Caco-2 (cell line): ENCODE measurements at regions of chr7 and their contacts with region 1.

Region 1: DNA sequence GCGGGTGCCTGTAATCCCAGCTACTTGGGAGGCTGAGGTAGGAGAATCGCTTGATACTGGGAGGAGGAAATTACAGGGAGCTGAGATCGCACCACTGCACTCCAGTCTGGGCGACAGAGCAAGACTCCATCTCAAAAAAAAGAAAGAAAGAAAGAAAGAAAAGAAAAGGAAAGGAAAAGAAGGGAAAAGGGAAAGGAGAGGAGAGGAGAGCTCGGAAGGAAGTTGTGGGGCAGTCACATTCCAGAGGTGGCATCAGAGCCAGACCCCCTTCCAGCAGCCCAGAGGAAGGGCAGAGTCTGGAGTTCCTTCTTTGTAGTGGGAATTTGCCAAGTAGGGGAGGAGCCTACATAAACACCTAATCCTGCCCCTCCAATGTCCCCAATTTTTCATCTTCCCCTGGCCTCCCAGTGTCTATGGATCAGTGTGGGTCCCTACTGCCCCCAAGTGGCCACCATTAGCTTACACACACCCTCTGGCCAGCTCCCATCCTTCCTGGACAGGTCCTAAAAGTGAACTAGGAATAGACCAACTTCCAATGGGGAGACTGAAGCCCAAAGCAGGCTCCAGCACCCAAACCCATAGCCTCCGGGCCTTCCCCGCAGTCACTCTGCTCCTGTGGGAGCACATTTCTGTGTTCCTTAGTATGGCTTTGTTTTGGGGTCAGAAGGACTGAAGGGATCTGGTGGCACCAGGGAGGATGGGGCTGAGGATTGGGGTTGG is 39.6 kb upstream of the HSPB1 start:
- DNase-seq: peak; percentile 80
- H3K4me3 ChIP-seq: no peak overlapping the region
- H3K4me3 Mint-ChIP-seq: no peak overlapping the region
- H3K27ac Mint-ChIP-seq: no peak overlapping the region
- H3K4me1 ChIP-seq: peaks cover 5% of the 10 kb centered on the region; the same call in 1 of the 2 replicates
- H3K4me1 Mint-ChIP-seq: no peaks in the 10 kb centered on the region
- H3K27me3 ChIP-seq: no peaks in the 10 kb centered on the region; the same call in 1 of the 2 replicates
- H3K27me3 Mint-ChIP-seq: no peaks in the 10 kb centered on the region
- CTCF ChIP-seq: peak; percentile 70 to 87

Region 2: GRCh38 chr7:76166404-76167255 is 96.2 kb before region 1 on chr7:
- CTCF ChIA-PET with region 1: interaction called, 10 read pairs
- POLR2A ChIA-PET with region 1: no interaction called
- intact Hi-C with region 1: no loop called
- DNase-seq: peak; percentile 98 to 99
- H3K4me3 ChIP-seq: peak overlapping the region; percentile 64
- H3K4me3 Mint-ChIP-seq: peak overlapping the region; percentile 78
- H3K27ac Mint-ChIP-seq: peak overlapping the region; percentile 94
- H3K4me1 ChIP-seq: no peaks in the 10 kb centered on the region
- H3K4me1 Mint-ChIP-seq: no peaks in the 10 kb centered on the region
- H3K27me3 ChIP-seq: no peaks in the 10 kb centered on the region
- H3K27me3 Mint-ChIP-seq: no peaks in the 10 kb centered on the region
- CTCF ChIP-seq: peak in 1 of 2 experiments; percentile 14

Region 3: DNA sequence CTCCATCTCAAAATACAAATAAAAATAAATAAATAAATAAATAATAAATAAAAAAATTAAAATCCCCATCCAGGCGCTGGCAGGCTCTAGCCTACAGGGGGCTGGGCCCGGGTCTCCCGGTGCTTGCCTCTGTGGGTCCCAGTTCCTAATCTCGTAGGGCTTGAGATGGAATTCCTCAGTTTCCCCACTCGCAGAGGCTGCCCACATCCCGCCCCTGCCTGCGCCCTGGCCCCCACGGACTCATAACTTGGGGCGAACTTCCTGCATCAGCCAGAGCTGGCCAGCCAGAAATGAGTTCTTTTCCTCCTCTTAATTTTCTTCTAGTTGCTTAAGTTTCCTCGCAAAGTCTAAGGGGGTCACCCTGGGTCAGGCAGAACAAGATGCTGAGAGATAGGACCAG is 83.2 kb before region 1 on chr7:
- CTCF ChIA-PET with region 1: interaction called, 24 read pairs
- POLR2A ChIA-PET with region 1: no interaction called
- intact Hi-C with region 1: loop called (anchors 1 kb)
- DNase-seq: no peak
- H3K4me3 ChIP-seq: no peak overlapping the region
- H3K4me3 Mint-ChIP-seq: no peak overlapping the region
- H3K27ac Mint-ChIP-seq: no peak overlapping the region
- H3K4me1 ChIP-seq: no peaks in the 10 kb centered on the region
- H3K4me1 Mint-ChIP-seq: peaks cover 6% of the 10 kb centered on the region
- H3K27me3 ChIP-seq: no peaks in the 10 kb centered on the region
- H3K27me3 Mint-ChIP-seq: peaks cover 5% of the 10 kb centered on the region
- CTCF ChIP-seq: no peak

Region 4: DNA sequence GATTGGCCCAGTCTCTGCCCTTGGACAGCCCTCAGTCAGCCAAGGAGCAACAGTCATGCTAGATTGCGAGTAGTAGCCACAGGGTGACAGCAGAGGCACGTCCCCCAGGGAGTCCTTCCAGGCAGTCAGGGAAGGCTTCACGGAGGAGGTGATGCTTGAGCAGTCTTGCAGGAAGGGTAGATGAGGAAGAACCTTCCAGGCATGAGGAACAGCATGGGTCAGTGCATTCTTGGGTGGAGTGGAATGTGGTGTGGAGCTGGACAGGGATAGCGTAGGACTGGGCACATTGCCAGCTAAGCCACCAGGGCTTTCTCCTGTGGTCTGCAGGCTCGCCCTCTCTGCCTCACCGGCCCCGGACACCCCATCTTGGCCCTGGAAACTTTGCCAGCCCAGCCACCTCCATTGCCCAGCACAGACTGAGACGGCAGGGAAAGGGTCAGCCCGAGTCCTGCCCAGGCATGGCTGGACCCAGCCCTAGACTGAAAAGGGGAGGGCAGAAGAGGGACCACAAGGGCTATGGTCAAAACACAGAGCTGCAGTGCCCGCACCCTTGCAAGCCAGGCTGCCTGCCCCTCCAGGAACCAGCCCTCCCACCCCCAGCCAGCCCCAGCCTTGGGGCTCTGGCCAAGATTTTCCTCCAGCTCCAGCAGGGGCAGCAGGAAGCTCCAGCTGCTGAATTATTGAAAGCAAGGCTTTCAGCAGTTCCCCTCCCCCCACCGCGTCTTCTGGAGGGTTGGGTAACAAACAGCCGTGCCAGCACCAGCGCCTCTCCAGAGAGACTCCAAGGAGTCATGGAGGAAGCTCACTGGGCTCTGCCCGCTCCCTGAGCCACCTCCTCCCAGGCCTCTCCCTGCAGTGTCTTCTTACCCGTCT is 42.4 kb before region 1 on chr7:
- CTCF ChIA-PET with region 1: interaction called, 4 read pairs
- POLR2A ChIA-PET with region 1: no interaction called
- intact Hi-C with region 1: loop called (anchors 5 kb)
- DNase-seq: peak; percentile 46 to 49
- H3K4me3 ChIP-seq: no peak overlapping the region
- H3K4me3 Mint-ChIP-seq: no peak overlapping the region
- H3K27ac Mint-ChIP-seq: no peak overlapping the region
- H3K4me1 ChIP-seq: peaks cover 8% of the 10 kb centered on the region
- H3K4me1 Mint-ChIP-seq: peaks cover 6% of the 10 kb centered on the region
- H3K27me3 ChIP-seq: no peaks in the 10 kb centered on the region
- H3K27me3 Mint-ChIP-seq: peaks cover 7% of the 10 kb centered on the region
- CTCF ChIP-seq: no peak

Region 5: GRCh38 chr7:76234931-76235441 is 27.9 kb before region 1 on chr7:
- CTCF ChIA-PET with region 1: interaction called, 10 read pairs
- POLR2A ChIA-PET with region 1: no interaction called
- intact Hi-C with region 1: no loop called
- DNase-seq: peak; percentile 90 to 96
- H3K4me3 ChIP-seq: peak overlapping the region; percentile 34
- H3K4me3 Mint-ChIP-seq: peak overlapping the region; percentile 51
- H3K27ac Mint-ChIP-seq: no peak overlapping the region
- H3K4me1 ChIP-seq: 0 out of 2 replicates have a peak, but pooled peaks cover 2% of the 10 kb centered on the region
- H3K4me1 Mint-ChIP-seq: no peaks in the 10 kb centered on the region
- H3K27me3 ChIP-seq: no peaks in the 10 kb centered on the region
- H3K27me3 Mint-ChIP-seq: peaks cover 13% of the 10 kb centered on the region
- CTCF ChIP-seq: no peak

Region 6: GRCh38 chr7:76297387-76297756 is 34.5 kb after region 1 on chr7:
- CTCF ChIA-PET with region 1: no interaction called
- POLR2A ChIA-PET with region 1: no interaction called
- intact Hi-C with region 1: no loop called
- DNase-seq: peak; percentile 62 to 80
- H3K4me3 ChIP-seq: no peak overlapping the region
- H3K4me3 Mint-ChIP-seq: no peak overlapping the region
- H3K27ac Mint-ChIP-seq: no peak overlapping the region
- H3K4me1 ChIP-seq: peaks cover 39% of the 10 kb centered on the region
- H3K4me1 Mint-ChIP-seq: peaks cover 12% of the 10 kb centered on the region
- H3K27me3 ChIP-seq: no peaks in the 10 kb centered on the region
- H3K27me3 Mint-ChIP-seq: no peaks in the 10 kb centered on the region
- CTCF ChIP-seq: no peak